Activated B cell treated with CpG ODN at 0.5 μM for 24 hours (primary cell): ENCODE measurements at regions of chr1 and their contacts with region 1.

Region 1: GRCh38 chr1:108661030-108661620 is at the start of gene HENMT1:
- DNase-seq: peak; percentile 75
- ATAC-seq: peak; percentile 82
- H3K4me3 Mint-ChIP-seq: peak within 1 kb of the TSS; percentile 86
- H3K27ac Mint-ChIP-seq: peak within 1 kb of the TSS; percentile 90
- H3K4me1 Mint-ChIP-seq: peaks cover 12% of the 10 kb centered on the region
- H3K27me3 Mint-ChIP-seq: no peaks in the 10 kb centered on the region
- CTCF ChIP-seq: no peak
- total RNA-seq, gene HENMT1: 6.1 and 6.4 TPM in 2 replicates

Region 2: DNA sequence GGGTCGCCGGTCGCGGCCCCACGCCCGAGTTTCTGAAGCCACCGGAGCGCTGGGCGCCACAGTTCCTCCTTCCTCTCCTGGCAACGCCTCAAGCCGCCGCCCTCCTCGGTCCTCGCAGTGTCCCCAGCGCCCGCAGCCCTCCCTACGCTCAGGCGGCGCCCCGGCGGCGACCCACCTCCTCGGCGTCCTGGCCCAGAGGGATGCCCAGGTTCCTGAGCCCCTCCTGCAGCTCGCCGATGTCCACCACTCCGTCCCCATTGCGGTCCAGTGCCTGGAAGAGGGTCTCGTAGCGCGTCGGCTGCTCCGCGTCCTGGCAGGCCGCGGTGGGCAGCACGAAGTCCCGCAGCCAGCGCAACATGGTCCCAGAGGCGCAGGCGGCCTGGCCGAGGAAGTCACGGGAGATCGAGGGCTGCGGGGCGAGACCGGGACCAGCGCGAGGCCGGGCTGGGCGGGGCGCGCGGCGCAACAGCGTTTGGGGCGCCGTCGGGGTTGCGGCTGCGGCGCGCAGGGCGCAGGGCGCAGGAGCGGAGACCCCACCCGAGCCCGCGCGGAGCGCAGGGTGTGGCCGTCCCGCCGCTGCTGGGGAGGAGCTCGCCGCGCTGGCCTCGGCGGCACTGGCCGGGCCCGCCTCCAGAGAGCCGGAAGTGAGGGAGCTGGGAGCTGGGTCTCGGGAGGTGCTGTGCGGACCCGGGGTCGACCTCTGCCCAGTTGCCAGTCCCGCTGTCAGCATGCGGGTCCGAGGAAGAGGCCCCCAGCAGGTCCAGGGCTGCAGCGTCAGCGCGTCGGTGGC is 461.1 kb before region 1 on chr1 and contains the start of gene SLC25A24:
- CTCF ChIA-PET with region 1: no interaction called
- POLR2A ChIA-PET with region 1: interaction called, 12 read pairs
- intact Hi-C with region 1: loop called (anchors 1 kb)
- DNase-seq: peak; percentile 85
- ATAC-seq: peak; percentile 94
- H3K4me3 Mint-ChIP-seq: peak within 1 kb of the TSS; percentile 93
- H3K27ac Mint-ChIP-seq: peak within 1 kb of the TSS; percentile 86
- H3K4me1 Mint-ChIP-seq: peaks cover 29% of the 10 kb centered on the region
- H3K27me3 Mint-ChIP-seq: no peaks in the 10 kb centered on the region
- CTCF ChIP-seq: no peak
- total RNA-seq, gene SLC25A24: 20.2 and 22.1 TPM in 2 replicates

Region 3: GRCh38 chr1:108643492-108644335 is 17.4 kb before region 1 on chr1:
- CTCF ChIA-PET with region 1: no interaction called
- POLR2A ChIA-PET with region 1: interaction called, 8 read pairs
- intact Hi-C with region 1: loop called (anchors 2 kb)
- DNase-seq: no peak
- ATAC-seq: peak; percentile 57
- H3K4me3 Mint-ChIP-seq: no peak overlapping the region
- H3K27ac Mint-ChIP-seq: no peak overlapping the region
- H3K4me1 Mint-ChIP-seq: peaks cover 19% of the 10 kb centered on the region
- H3K27me3 Mint-ChIP-seq: no peaks in the 10 kb centered on the region
- CTCF ChIP-seq: no peak

Region 4: GRCh38 chr1:108963052-108963686 is 302.0 kb after region 1 on chr1 and contains the start of gene CLCC1:
- CTCF ChIA-PET with region 1: no interaction called
- POLR2A ChIA-PET with region 1: interaction called, 3 read pairs
- intact Hi-C with region 1: loop called (anchors 1 kb)
- DNase-seq: peak; percentile 84
- ATAC-seq: peak; percentile 94
- H3K4me3 Mint-ChIP-seq: peak within 1 kb of the TSS; percentile 88
- H3K27ac Mint-ChIP-seq: peak within 1 kb of the TSS; percentile 91
- H3K4me1 Mint-ChIP-seq: peaks cover 35% of the 10 kb centered on the region
- H3K27me3 Mint-ChIP-seq: no peaks in the 10 kb centered on the region
- CTCF ChIP-seq: no peak
- total RNA-seq, gene CLCC1: 19.5 and 28.3 TPM in 2 replicates

Region 5: GRCh38 chr1:109312978-109313775 is 652.1 kb after region 1 on chr1:
- CTCF ChIA-PET with region 1: no interaction called
- POLR2A ChIA-PET with region 1: interaction called, 11 read pairs
- intact Hi-C with region 1: no loop called
- DNase-seq: no peak
- ATAC-seq: no peak
- H3K4me3 Mint-ChIP-seq: no peak overlapping the region
- H3K27ac Mint-ChIP-seq: no peak overlapping the region
- H3K4me1 Mint-ChIP-seq: peaks cover 2% of the 10 kb centered on the region
- H3K27me3 Mint-ChIP-seq: peaks cover 3% of the 10 kb centered on the region
- CTCF ChIP-seq: no peak